ENCODE measurements at regions of chr11 and their contacts with region 1.

Region 1: GRCh38 chr11:17063171-17064002 is 14.1 kb downstream of the RPS13 start:
- DNase-seq: peak; percentile 64
- H3K27ac ChIP-seq: no peak overlapping the region
- CTCF ChIP-seq: peak; percentile 74

Region 2: GRCh38 chr11:16945671-16946469 is 117.5 kb before region 1 on chr11:
- CTCF ChIA-PET with region 1: interaction called, 17 read pairs
- POLR2A ChIA-PET with region 1: no interaction called
- DNase-seq: peak; percentile 73
- H3K27ac ChIP-seq: no peak overlapping the region
- CTCF ChIP-seq: peak; percentile 55

Measured in RWPE1 (cell line).